Pancreas (tissue), 10 donors: ENCODE measurements at regions of chr7 and their contacts with region 1.

Region 1: DNA sequence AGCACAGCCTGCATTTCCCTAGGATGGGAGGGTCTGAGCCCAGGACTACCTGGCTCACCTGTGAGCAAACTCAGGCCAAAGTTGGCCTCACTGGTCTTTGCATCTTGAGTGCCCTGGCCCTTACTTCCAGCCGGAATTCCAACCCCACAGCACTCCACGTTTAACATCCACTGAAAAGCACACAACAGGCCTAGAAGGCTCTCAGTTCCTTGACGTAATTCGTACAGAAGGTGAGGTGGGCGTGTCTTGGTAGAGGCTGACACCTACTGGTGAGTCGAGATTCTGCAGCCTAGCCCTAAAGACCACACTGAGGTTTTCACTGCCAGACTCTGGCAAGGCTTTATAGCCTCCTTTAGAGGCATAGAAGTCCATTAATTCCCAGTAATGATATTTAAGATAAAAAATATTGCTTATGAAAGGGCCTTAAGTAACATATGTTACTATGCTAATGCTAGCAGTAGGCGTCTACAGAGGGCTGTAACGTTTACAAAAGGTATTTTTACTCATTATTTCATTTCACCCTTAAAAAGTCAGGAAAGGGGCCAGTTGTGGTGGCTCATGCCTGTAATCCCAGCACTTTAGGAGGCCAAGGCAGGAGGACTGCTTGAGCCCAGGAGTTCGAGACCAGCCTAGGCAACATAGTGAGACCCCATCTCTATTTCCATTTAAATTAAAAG is 95.8 kb downstream of the HIP1 start:
- DNase-seq: peak in 4 of 6 donors; percentile 18 to 41 (median 34)
- ATAC-seq: peak in 3 of 4 donors; percentile 51 to 73 (median 64)
- H3K4me3 ChIP-seq: no peak overlapping the region
- H3K27ac ChIP-seq: no peak overlapping the region
- H3K4me1 ChIP-seq: no peaks in the 10 kb centered on the region
- H3K27me3 ChIP-seq: no peaks in the 10 kb centered on the region
- CTCF ChIP-seq: peak; percentile 22 to 49 (median 42)

Region 2: GRCh38 chr7:75739796-75740672 is 97.1 kb after region 1 on chr7:
- intact Hi-C with region 1: loop called in 1 of 3 experiments (anchors 5 kb)
- DNase-seq: no peak
- ATAC-seq: no peak
- H3K4me3 ChIP-seq: peak overlapping the region; percentile 70 to 99 (median 95)
- H3K27ac ChIP-seq: peak overlapping the region; percentile 31 to 88 (median 67)
- H3K4me1 ChIP-seq: no peaks in the 10 kb centered on the region
- H3K27me3 ChIP-seq: no peaks in the 10 kb centered on the region
- CTCF ChIP-seq: no peak